B cell (primary cell): ENCODE measurements at regions of chr16 and their contacts with region 1.

Region 1: GRCh38 chr16:67372664-67373063 is 20.6 kb downstream of the TPPP3 start:
- DNase-seq: peak; percentile 18
- ATAC-seq: no peak
- H3K4me3 ChIP-seq: no peak overlapping the region
- H3K4me3 Mint-ChIP-seq: no peak overlapping the region
- H3K27ac ChIP-seq: no peak overlapping the region
- H3K27ac Mint-ChIP-seq: no peak overlapping the region
- H3K4me1 ChIP-seq: peaks cover 0 to 5% of the 10 kb centered on the region in 2 donors
- H3K4me1 Mint-ChIP-seq: no peaks in the 10 kb centered on the region
- H3K27me3 ChIP-seq: peaks cover 0 to 6% (median 0%) of the 10 kb centered on the region in 4 experiments
- H3K27me3 Mint-ChIP-seq: peaks cover 4% of the 10 kb centered on the region
- CTCF ChIP-seq: peak; percentile 19

Region 2: DNA sequence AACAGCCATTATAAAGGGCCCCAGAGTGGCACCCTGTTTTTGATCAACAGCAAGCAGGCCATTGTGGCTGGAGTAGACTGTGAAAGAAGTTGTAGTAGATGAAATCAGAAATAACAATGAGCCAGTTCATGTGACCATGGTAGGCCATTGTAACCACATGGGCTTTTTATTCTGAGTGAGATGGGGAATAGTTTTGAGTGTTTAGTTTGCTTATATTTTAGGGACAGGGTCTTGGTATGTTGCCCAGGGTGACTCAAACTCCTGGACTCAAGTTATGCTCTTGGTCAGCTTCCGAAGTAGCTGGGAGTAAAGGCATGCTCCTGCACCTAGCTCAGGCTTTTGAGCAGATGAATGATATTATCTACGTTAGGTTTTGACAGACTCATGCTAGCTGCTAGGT is 331.8 kb before region 1 on chr16:
- CTCF ChIA-PET with region 1: no interaction called
- POLR2A ChIA-PET with region 1: interaction called, 10 read pairs
- intact Hi-C with region 1: no loop called
- DNase-seq: no peak
- ATAC-seq: no peak
- H3K4me3 ChIP-seq: no peak overlapping the region
- H3K4me3 Mint-ChIP-seq: no peak overlapping the region
- H3K27ac ChIP-seq: no peak overlapping the region
- H3K27ac Mint-ChIP-seq: no peak overlapping the region
- H3K4me1 ChIP-seq: no peaks in the 10 kb centered on the region
- H3K4me1 Mint-ChIP-seq: peaks cover 10% of the 10 kb centered on the region
- H3K27me3 ChIP-seq: no peaks in the 10 kb centered on the region
- H3K27me3 Mint-ChIP-seq: no peaks in the 10 kb centered on the region
- CTCF ChIP-seq: no peak